Activated naive CD4-positive, alpha-beta T cell treated with anti-CD3 and anti-CD28 coated beads for 36 hours (primary cell): ENCODE measurements at regions of chr9 and their contacts with region 1.

Region 1: DNA sequence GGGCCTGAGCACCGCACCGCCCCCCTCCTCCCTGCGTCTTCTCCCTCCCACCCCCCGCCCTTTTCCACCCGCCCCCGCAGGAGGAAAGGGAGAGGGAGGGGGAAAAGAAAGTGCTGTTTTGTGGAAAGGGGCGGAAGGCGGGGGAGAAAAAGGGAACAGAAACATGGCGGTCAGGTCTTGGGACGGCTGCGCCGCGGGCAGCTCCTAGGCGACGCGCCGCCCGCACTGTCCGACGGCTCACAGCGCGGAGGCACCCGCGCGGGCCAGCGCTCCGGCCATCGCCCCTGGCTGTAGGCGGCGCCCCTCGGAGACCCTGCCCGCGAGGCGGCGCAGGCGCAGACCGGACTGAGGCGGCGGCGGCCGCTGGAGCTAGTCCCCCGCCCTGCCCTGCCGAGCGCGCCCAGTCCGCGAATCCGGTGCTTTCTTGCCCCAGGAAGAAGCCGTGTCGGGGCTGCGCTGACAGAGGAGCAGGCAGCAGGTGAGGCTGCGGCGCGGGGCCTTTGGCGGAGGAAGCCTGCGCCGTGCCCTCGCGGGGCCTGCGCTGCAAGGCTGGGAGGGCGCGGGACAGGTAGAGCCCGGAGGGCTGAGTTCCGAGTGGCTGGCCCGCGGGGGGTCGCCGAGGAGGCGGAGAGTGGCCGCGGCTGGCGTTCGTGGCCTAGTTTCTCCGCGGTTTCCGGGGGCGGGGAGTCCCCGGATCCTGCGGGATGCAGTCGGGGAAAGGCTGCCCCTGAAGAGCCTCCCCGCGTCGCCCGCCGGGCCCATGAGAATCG is at the start of gene DENND4C:
- DNase-seq: peak; percentile 78
- H3K4me3 Mint-ChIP-seq: peak within 1 kb of the TSS; percentile 67
- H3K27ac Mint-ChIP-seq: no peak within 1 kb of the TSS
- H3K4me1 Mint-ChIP-seq: peaks cover 15% of the 10 kb centered on the region
- H3K27me3 Mint-ChIP-seq: no peaks in the 10 kb centered on the region
- total RNA-seq, gene DENND4C: 8.7 to 9.0 TPM

Region 2: DNA sequence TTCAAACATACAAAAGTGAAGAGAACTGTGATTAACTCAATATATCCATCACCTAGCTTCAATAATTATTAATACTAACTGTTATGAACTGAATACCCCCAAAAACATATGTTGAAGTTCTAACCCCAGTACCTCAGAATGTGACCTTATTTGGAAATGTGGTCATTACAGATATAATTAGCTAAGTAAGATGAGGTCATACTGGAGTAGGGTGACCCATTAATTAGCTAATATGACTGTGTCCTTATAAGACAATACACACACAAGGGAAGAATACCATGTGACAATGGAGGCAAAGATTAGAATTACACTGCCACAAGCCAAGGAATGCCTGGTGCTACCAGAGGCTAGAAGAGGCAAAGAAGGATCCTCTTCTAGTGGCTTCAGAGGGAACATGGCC is 173.5 kb before region 1 on chr9:
- CTCF ChIA-PET with region 1: no interaction called
- intact Hi-C with region 1: no loop called
- DNase-seq: no peak
- H3K4me3 Mint-ChIP-seq: no peak overlapping the region
- H3K27ac Mint-ChIP-seq: no peak overlapping the region
- H3K4me1 Mint-ChIP-seq: peaks cover under 1% of the 10 kb centered on the region
- H3K27me3 Mint-ChIP-seq: no peaks in the 10 kb centered on the region

Region 3: GRCh38 chr9:19127881-19128500 is 102.5 kb before region 1 on chr9:
- CTCF ChIA-PET with region 1: interaction called, 3 read pairs
- intact Hi-C with region 1: loop called (anchors 1 kb)
- DNase-seq: peak; percentile 45
- H3K4me3 Mint-ChIP-seq: peak overlapping the region; percentile 92
- H3K27ac Mint-ChIP-seq: peak overlapping the region; percentile 91
- H3K4me1 Mint-ChIP-seq: peaks cover 53% of the 10 kb centered on the region
- H3K27me3 Mint-ChIP-seq: no peaks in the 10 kb centered on the region

Region 4: DNA sequence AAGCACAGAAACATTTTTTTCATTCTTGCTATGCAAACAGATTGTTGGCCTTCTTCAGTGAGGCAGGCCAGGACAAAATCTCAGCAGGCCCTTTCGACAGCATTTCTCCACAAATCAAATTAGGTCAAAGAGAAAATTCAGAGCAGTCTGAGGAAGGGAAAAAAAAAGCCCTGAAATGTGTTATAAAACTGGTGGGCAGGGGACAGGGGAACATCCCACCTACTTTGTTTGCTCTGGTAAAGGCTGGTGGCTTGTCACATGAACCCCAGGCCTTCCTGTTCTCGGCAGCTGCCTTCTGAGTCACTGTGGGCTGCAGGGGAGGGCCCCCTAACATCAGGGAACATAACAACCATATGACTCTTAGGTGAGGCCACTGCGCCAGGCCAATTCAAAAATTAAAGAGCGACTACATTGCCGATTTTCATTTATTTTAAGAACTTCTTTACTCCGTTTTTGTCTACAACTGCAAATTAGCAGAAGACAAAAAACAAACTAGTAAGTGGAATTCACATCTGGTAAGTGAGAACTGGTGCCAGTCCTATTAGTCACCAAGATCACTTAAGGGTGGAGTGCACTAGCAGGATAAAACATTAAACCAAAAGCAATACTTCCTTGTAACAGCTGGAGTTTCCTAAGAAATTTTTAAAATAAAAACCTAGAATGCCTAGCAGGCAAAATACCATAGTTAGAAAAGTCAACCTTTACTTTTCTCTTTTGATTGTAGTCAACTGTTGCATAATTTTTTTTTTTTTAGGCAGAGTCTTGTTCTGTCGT is 46.2 kb before region 1 on chr9:
- CTCF ChIA-PET with region 1: interaction called, 5 read pairs
- intact Hi-C with region 1: loop called (anchors 1 kb)
- DNase-seq: peak; percentile 92
- H3K4me3 Mint-ChIP-seq: peak overlapping the region; percentile 47
- H3K27ac Mint-ChIP-seq: peak overlapping the region; percentile 89
- H3K4me1 Mint-ChIP-seq: peaks cover 14% of the 10 kb centered on the region
- H3K27me3 Mint-ChIP-seq: no peaks in the 10 kb centered on the region

Region 5: GRCh38 chr9:19379697-19380046 is 149.1 kb after region 1 on chr9:
- CTCF ChIA-PET with region 1: interaction called, 3 read pairs
- intact Hi-C with region 1: loop called (anchors 1 kb)
- DNase-seq: no peak
- H3K4me3 Mint-ChIP-seq: peak overlapping the region; percentile 91
- H3K27ac Mint-ChIP-seq: peak overlapping the region; percentile 97
- H3K4me1 Mint-ChIP-seq: peaks cover 37% of the 10 kb centered on the region
- H3K27me3 Mint-ChIP-seq: no peaks in the 10 kb centered on the region

Region 6: DNA sequence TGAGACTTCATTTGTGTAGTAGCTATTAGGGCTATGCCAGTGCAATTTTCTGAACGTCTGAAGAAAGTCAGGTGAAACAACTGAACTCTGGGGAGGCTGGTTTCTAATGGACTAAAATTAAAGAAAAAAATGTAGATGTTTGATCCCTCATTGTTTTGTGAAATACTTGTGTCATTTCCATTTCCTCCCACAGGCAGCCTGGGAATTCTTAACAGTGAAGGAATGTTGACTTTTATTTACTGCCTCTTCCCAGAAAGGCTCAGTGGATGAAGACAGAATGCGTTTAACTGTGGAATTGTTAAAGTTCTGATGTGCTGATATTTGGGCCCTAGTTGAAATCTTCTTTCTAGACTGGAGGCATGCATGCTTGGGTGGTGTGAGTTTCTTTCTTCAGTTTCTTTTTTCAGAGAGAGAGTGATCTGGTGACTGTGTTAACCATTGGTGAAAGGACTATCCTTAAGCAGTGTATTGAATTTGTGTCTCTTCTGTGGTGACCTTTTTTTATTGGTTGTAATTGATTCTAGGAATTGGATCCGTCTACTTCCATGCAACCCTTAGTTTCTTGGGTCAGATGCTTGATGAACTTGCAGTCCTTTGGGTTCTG is 193.7 kb after region 1 on chr9:
- CTCF ChIA-PET with region 1: no interaction called
- intact Hi-C with region 1: no loop called
- DNase-seq: no peak
- H3K4me3 Mint-ChIP-seq: no peak overlapping the region
- H3K27ac Mint-ChIP-seq: no peak overlapping the region
- H3K4me1 Mint-ChIP-seq: no peaks in the 10 kb centered on the region
- H3K27me3 Mint-ChIP-seq: no peaks in the 10 kb centered on the region

Region 7: DNA sequence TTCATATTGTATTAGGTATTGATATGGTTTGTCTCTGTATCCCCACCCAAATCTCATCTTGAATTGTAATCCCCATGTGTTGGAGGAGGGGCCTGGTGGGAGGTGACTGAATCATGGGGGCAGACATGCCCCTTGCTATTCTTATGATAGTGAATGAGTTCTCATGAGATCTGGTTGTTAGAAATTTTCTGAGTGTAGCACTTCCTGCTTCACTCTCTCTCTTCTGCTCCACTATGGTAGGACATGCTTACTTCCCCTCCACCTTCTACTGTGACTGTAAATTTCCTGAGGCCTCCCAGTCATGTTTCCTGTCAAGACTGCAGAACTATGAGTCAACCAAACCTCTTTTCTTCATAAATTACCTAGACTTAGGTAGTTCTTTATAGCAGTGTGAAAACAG is 745.7 kb after region 1 on chr9:
- CTCF ChIA-PET with region 1: no interaction called
- intact Hi-C with region 1: loop called (anchors 5 kb)
- DNase-seq: peak; percentile 69
- H3K4me3 Mint-ChIP-seq: no peak overlapping the region
- H3K27ac Mint-ChIP-seq: peak overlapping the region; percentile 83
- H3K4me1 Mint-ChIP-seq: peaks cover 28% of the 10 kb centered on the region
- H3K27me3 Mint-ChIP-seq: no peaks in the 10 kb centered on the region